ENCODE measurements at regions of chr17 and their contacts with region 1.

Region 1: GRCh38 chr17:29292992-29293889 is 707 bp downstream of the NUFIP2 start:
- DNase-seq: no peak
- H3K4me3 ChIP-seq: peak overlapping the region; percentile 79
- H3K27me3 ChIP-seq: no peaks in the 10 kb centered on the region
- CTCF ChIP-seq: no peak

Region 2: GRCh38 chr17:29433541-29433940 is 140.3 kb after region 1 on chr17:
- CTCF ChIA-PET with region 1: no interaction called
- POLR2A ChIA-PET with region 1: no interaction called
- DNase-seq: no peak
- H3K4me3 ChIP-seq: peak overlapping the region; percentile 9; the same call in 1 of the 2 replicates
- H3K27me3 ChIP-seq: no peaks in the 10 kb centered on the region
- CTCF ChIP-seq: no peak

Region 3: DNA sequence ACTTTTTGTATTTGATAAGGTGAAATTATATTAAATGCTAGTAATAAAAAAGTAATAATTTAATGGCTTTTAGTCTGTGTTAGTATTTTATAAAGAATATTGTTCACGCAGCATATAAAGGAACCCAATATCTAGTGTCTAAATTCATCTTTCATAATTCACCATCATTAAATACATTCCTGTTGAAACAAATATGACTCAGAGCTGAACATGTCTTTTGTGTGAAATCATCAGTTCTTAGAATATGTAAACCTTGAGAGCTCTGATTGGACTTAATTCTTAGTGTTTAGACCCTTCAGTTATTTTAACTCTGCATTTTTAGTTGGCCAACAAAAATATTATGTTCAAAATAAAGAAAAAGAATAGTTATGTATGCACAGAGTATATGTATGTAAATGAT is 201.8 kb after region 1 on chr17:
- CTCF ChIA-PET with region 1: no interaction called
- POLR2A ChIA-PET with region 1: interaction called, 20 read pairs
- DNase-seq: no peak
- H3K4me3 ChIP-seq: no peak overlapping the region
- H3K27me3 ChIP-seq: no peaks in the 10 kb centered on the region
- CTCF ChIP-seq: no peak

Region 4: DNA sequence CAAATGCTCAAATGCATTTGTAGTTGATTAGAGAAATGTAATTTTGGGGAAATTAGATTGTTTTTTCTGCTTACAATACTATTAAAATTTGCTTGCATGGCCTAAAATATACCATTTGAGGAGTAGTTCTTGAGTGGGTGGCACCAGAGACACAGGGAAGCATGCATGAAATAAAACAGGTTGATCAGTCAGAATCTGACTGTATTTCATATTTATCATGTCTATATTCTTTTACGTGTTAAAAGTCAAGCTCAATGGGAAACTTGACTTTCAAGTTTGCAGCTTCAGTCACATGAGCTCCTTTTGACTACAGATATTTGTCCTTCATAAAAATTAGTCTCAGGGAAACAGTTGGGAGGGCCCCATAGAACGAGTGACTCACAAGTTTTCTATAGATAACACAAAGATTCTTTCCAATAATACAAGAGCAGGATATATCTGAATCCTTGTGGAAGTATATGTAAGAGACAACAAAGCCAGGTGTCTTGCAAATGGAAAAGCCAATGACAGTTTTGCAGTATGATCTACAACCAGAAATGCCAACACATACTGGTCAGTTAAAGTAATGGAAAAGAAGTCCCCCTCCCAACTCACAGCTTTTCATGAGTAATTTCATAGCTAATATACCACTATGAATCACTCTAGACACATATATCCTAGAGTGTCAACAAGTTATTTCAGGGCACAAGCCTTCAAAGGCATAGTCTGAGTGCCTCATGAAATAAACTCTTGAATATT is 371.7 kb after region 1 on chr17:
- CTCF ChIA-PET with region 1: no interaction called
- POLR2A ChIA-PET with region 1: no interaction called
- DNase-seq: no peak
- H3K4me3 ChIP-seq: no peak overlapping the region
- H3K27me3 ChIP-seq: no peaks in the 10 kb centered on the region
- CTCF ChIP-seq: no peak

Measured in BJ (cell line).